ENCODE measurements at regions of chr3 and their contacts with region 1.

Region 1: GRCh38 chr3:194333212-194333980 is 17.7 kb downstream of the CPN2 start:
- DNase-seq: peak; percentile 58 to 70
- ATAC-seq: peak; percentile 86 to 96
- H3K4me3 ChIP-seq: peak overlapping the region; percentile 34 to 67 (median 46)
- H3K27ac ChIP-seq: no peak overlapping the region
- H3K4me1 ChIP-seq: peaks cover 3 to 6% of the 10 kb centered on the region in 2 donors
- H3K27me3 ChIP-seq: peaks cover 3 to 9% (median 5%) of the 10 kb centered on the region in 3 donors
- CTCF ChIP-seq: peak; percentile 92 to 99 (median 97)
- POLR2A ChIP-seq: no peak

Region 2: GRCh38 chr3:194344012-194344411 is 10.6 kb after region 1 on chr3:
- in situ Hi-C with region 1: no loop called
- intact Hi-C with region 1: loop called (anchors 1 kb)
- DNase-seq: peak; percentile 41 to 50
- ATAC-seq: peak; percentile 44 to 75
- H3K4me3 ChIP-seq: no peak overlapping the region
- H3K27ac ChIP-seq: no peak overlapping the region
- H3K4me1 ChIP-seq: no peaks in the 10 kb centered on the region
- H3K27me3 ChIP-seq: no peaks in the 10 kb centered on the region
- CTCF ChIP-seq: peak; percentile 63 to 92 (median 77)
- POLR2A ChIP-seq: no peak

Region 3: GRCh38 chr3:194404365-194405140 is 71.2 kb after region 1 on chr3:
- in situ Hi-C with region 1: loop called in 2 of 4 experiments (anchors 5 kb)
- intact Hi-C with region 1: loop called (anchors 1 kb)
- DNase-seq: no peak
- ATAC-seq: no peak
- H3K4me3 ChIP-seq: no peak overlapping the region
- H3K27ac ChIP-seq: no peak overlapping the region
- H3K4me1 ChIP-seq: no peaks in the 10 kb centered on the region
- H3K27me3 ChIP-seq: peaks cover 0 to 6% (median 5%) of the 10 kb centered on the region in 3 donors
- CTCF ChIP-seq: peak; percentile 31 to 68 (median 47)
- POLR2A ChIP-seq: no peak

Region 4: DNA sequence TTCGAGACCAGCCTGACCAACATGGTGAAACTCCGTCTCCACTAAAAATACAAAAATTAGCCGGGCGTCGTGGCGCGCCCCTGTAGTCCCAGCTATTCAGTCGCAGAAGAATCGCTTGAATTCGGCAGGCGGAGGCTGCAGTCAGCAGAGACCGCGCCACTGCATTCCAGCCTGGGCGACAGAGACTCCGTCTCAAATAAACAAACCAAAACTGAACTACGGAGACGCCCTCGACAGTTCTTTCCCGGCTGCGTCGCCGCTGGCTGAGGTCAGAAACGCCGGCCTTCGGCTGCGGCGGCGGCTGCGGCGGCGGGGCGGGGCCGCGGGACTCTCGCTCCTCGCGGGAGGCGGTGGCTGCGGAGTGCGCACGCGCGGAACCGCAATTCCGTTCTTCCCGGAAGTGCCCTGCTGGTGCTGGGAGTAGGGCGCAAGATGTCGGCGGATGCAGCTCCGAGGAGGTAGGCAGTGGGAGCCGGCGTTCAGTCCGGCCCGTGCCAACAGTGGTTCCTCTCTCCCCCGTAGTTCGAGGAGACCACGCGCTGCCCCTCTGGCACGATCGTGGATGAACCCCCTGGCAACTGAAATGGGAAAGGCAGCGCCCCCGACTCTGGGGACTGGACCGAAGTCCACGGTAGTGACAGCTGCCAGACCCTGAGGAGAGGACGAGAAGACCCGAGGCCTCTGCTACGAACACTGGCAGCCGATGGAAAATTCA is 250.4 kb after region 1 on chr3:
- in situ Hi-C with region 1: loop called in 2 of 4 experiments (anchors 25 kb)
- intact Hi-C with region 1: no loop called
- DNase-seq: peak; percentile 84 to 90
- ATAC-seq: peak; percentile 96 to 97
- H3K4me3 ChIP-seq: peak overlapping the region; percentile 64 to 79 (median 71)
- H3K27ac ChIP-seq: peak overlapping the region; percentile 77 to 89 (median 82)
- H3K4me1 ChIP-seq: peaks cover 0 to 10% of the 10 kb centered on the region in 2 donors
- H3K27me3 ChIP-seq: no peaks in the 10 kb centered on the region
- CTCF ChIP-seq: no peak
- POLR2A ChIP-seq: peak; percentile 84 to 90

Region 5: GRCh38 chr3:194592798-194593752 is 259.7 kb after region 1 on chr3:
- in situ Hi-C with region 1: loop called in 2 of 4 experiments (anchors 25 kb)
- intact Hi-C with region 1: loop called (anchors 2 kb)
- DNase-seq: peak; percentile 34 to 39
- ATAC-seq: peak; percentile 82 to 87
- H3K4me3 ChIP-seq: no peak overlapping the region
- H3K27ac ChIP-seq: peak overlapping the region in 1 of 4 donors; percentile 27
- H3K4me1 ChIP-seq: peaks cover 0 to 3% of the 10 kb centered on the region in 2 donors
- H3K27me3 ChIP-seq: no peaks in the 10 kb centered on the region
- CTCF ChIP-seq: no peak
- POLR2A ChIP-seq: no peak

Region 6: DNA sequence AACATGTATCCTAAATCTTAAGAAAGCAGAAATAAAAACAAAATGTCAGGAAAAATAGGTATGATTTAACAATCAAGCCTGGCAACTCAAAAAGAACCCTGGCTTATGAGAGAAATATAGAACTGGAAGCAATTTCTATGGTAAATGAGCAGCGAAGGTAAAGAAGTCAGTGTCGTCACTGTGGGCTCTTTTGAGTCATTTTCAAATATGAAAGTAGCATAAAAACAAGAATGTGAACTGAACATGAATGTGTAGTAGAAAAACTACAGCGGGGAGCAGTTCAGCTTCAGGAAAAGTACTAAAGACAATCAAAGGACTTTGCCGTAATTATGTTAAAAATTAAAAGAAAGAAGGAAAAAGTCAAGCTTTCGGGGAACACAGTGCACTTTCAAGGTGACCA is 321.0 kb after region 1 on chr3:
- in situ Hi-C with region 1: no loop called
- intact Hi-C with region 1: no loop called
- DNase-seq: no peak
- ATAC-seq: no peak
- H3K4me3 ChIP-seq: no peak overlapping the region
- H3K27ac ChIP-seq: no peak overlapping the region
- H3K4me1 ChIP-seq: peaks cover 0 to 4% of the 10 kb centered on the region in 2 donors
- H3K27me3 ChIP-seq: no peaks in the 10 kb centered on the region
- CTCF ChIP-seq: no peak
- POLR2A ChIP-seq: no peak

Measured in gastrocnemius medialis (tissue), 4 donors.